Heart left ventricle (tissue), 16 donors: ENCODE measurements at regions of chr6 and their contacts with region 1.

Region 1: GRCh38 chr6:42642794-42643193 is 79.0 kb downstream of the UBR2 start:
- DNase-seq: no peak
- ATAC-seq: no peak
- H3K4me3 ChIP-seq: no peak overlapping the region
- H3K27ac ChIP-seq: no peak overlapping the region
- H3K4me1 ChIP-seq: peaks cover 0 to 4% (median 0%) of the 10 kb centered on the region in 12 donors
- H3K27me3 ChIP-seq: no peaks in the 10 kb centered on the region
- CTCF ChIP-seq: no peak
- POLR2A ChIP-seq: no peak

Region 2: GRCh38 chr6:42322676-42323075 is 320.1 kb before region 1 on chr6:
- intact Hi-C with region 1: no loop called
- DNase-seq: no peak
- ATAC-seq: no peak
- H3K4me3 ChIP-seq: no peak overlapping the region
- H3K27ac ChIP-seq: no peak overlapping the region
- H3K4me1 ChIP-seq: no peaks in the 10 kb centered on the region
- H3K27me3 ChIP-seq: no peaks in the 10 kb centered on the region
- CTCF ChIP-seq: no peak
- POLR2A ChIP-seq: no peak

Region 3: DNA sequence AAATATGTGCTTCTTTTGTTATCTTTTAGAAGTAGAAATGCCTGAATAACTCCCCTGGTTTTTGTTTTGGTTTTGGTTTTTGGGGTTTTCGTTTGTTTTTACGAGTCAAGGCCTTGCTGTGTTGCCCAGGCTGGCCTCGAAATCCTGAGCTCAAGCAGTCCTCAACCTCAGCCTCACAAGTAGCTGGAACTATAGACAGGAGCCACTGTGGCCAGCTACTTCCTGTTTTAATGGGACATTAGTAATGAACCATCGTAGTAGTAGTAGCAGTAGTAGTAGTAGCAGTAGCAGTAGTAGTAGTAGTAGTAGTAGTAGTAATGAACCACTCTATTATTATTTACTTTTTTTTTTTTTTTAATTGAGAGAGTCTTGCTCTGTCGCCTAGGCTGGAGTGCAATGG is 12.9 kb before region 1 on chr6:
- intact Hi-C with region 1: no loop called
- DNase-seq: no peak
- ATAC-seq: no peak
- H3K4me3 ChIP-seq: no peak overlapping the region
- H3K27ac ChIP-seq: peak overlapping the region in 1 of 12 donors; percentile 4
- H3K4me1 ChIP-seq: peaks cover 0 to 13% (median 1%) of the 10 kb centered on the region in 12 donors
- H3K27me3 ChIP-seq: no peaks in the 10 kb centered on the region
- CTCF ChIP-seq: no peak
- POLR2A ChIP-seq: no peak

Region 4: DNA sequence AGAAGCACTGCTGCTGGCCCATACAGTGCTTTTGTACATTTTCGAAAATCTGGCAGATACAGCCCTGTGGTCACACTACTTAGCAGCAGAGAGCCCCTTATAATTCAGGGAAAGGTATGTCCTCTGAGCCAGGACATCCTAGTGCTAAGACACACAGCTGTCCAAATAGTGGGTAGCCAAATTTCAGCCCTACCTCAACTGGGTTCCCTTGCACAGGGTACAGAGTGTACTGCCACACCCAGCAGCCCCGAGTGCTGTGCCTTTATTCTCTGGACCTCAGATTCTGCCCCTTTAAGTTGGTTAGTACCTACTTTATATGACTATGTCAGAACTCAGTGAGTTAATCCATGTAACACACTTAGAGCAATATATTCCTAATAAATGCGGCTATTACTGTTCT is 32.0 kb after region 1 on chr6:
- intact Hi-C with region 1: loop called in 1 of 10 experiments (anchors 5 kb)
- DNase-seq: no peak
- ATAC-seq: no peak
- H3K4me3 ChIP-seq: no peak overlapping the region
- H3K27ac ChIP-seq: no peak overlapping the region
- H3K4me1 ChIP-seq: no peaks in the 10 kb centered on the region
- H3K27me3 ChIP-seq: no peaks in the 10 kb centered on the region
- CTCF ChIP-seq: no peak
- POLR2A ChIP-seq: no peak